Aorta (tissue), 5 donors: ENCODE measurements at regions of chr15 and their contacts with region 1.

Region 1: GRCh38 chr15:44728576-44729407 is 7.5 kb upstream of the TRIM69 start:
- DNase-seq: peak; percentile 95 to 97
- ATAC-seq: peak; percentile 97
- H3K4me3 ChIP-seq: peak overlapping the region; percentile 80 to 88
- H3K27ac ChIP-seq: peak overlapping the region; percentile 20 to 96
- H3K4me1 ChIP-seq: peaks cover 0 to 1% of the 10 kb centered on the region in 2 donors
- H3K27me3 ChIP-seq: no peaks in the 10 kb centered on the region

Region 2: DNA sequence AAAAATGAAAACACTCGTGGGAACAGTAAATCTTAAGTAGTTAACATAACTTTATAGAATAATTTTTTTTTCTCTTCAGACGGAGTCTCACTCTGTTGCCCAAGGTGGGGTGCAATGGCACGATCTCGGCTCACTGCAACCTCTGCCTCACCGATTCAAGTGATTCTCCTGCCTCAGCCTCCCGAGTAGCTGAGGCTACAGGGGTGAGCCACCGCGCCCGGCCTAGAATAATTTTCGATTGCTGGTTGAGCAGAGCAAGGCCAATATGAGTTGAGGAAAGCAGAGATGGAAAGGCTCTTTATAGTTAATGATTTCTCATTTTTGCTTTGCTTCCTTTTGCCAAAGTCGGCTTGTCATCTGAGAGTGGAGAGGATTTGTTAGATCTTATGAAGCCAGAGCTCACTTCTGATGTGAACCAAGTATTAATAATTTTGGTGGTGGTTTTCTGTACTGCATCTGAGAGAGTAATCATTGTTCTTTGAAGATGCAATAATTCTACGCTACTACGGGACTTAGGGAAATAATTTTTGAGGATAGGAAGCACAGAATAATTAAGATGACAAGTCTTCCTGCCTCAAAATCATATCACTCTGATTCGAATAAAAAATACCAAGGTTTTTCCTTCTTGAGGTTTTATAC is 441.9 kb before region 1 on chr15:
- intact Hi-C with region 1: loop called in 1 of 2 experiments (anchors 5 kb)
- DNase-seq: no peak
- ATAC-seq: no peak
- H3K4me3 ChIP-seq: peak overlapping the region in 1 of 2 donors; percentile 100
- H3K27ac ChIP-seq: no peak overlapping the region
- H3K4me1 ChIP-seq: no peaks in the 10 kb centered on the region
- H3K27me3 ChIP-seq: no peaks in the 10 kb centered on the region

Region 3: GRCh38 chr15:44536962-44537734 is 191.6 kb before region 1 on chr15 and contains the start of gene EIF3J:
- intact Hi-C with region 1: loop called in 1 of 2 experiments (anchors 5 kb)
- DNase-seq: peak; percentile 98
- ATAC-seq: peak; percentile 98
- H3K4me3 ChIP-seq: peak within 1 kb of the TSS; percentile 76 to 77
- H3K27ac ChIP-seq: peak within 1 kb of the TSS; percentile 91 to 93
- H3K4me1 ChIP-seq: peaks cover 2 to 11% of the 10 kb centered on the region in 2 donors
- H3K27me3 ChIP-seq: no peaks in the 10 kb centered on the region
- total RNA-seq, gene EIF3J: 61.7 to 65.9 TPM

Region 4: DNA sequence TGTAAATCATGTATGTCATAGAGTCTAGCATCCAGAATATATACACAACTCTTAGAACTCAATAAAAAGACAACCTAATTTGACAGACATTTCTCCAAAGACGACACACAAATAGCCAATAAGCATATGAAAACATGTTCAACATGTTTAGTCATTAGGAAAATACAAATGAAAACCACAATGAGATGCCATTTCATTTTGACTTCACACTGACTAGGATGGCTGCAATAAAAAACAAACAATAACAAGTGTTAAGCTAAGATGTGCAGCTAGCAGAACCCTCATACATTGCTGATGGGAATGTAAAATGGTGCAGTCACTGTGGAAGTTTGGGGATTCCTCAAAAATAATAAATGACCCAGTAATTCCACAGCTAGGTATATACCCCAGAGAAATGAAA is 81.8 kb before region 1 on chr15:
- intact Hi-C with region 1: no loop called
- DNase-seq: no peak
- ATAC-seq: no peak
- H3K4me3 ChIP-seq: no peak overlapping the region
- H3K27ac ChIP-seq: no peak overlapping the region
- H3K4me1 ChIP-seq: no peaks in the 10 kb centered on the region
- H3K27me3 ChIP-seq: no peaks in the 10 kb centered on the region

Region 5: GRCh38 chr15:44663409-44664308 is 65.1 kb before region 1 on chr15 and contains the start of gene SPG11:
- intact Hi-C with region 1: loop called in 1 of 2 experiments (anchors 2 kb)
- DNase-seq: peak; percentile 99
- ATAC-seq: peak; percentile 99
- H3K4me3 ChIP-seq: peak within 1 kb of the TSS; percentile 68 to 91
- H3K27ac ChIP-seq: peak within 1 kb of the TSS; percentile 88
- H3K4me1 ChIP-seq: no peaks in the 10 kb centered on the region
- H3K27me3 ChIP-seq: no peaks in the 10 kb centered on the region
- total RNA-seq, gene SPG11: 61.1 to 96.3 TPM

Region 6: GRCh38 chr15:44711356-44712107 is 17.3 kb before region 1 on chr15 and contains the start of gene B2M:
- intact Hi-C with region 1: loop called in 1 of 2 experiments (anchors 2 kb)
- DNase-seq: peak; percentile 97 to 98
- ATAC-seq: peak; percentile 97
- H3K4me3 ChIP-seq: peak within 1 kb of the TSS; percentile 77 to 96
- H3K27ac ChIP-seq: peak within 1 kb of the TSS; percentile 92 to 99
- H3K4me1 ChIP-seq: peaks cover 0 to 1% of the 10 kb centered on the region in 2 donors
- H3K27me3 ChIP-seq: no peaks in the 10 kb centered on the region
- total RNA-seq, gene B2M: 2,130 to 2,403 TPM